Activated CD4-positive, alpha-beta T cell treated with anti-CD3 and anti-CD28 coated beads, Interleukin-2, amount 10 ng/mL, durations not matched to agents 7 days and 5 days (primary cell): ENCODE measurements at regions of chr16 and their contacts with region 1.

Region 1: GRCh38 chr16:81035398-81035974 is at the start of gene ATMIN:
- DNase-seq: peak; percentile 87
- H3K4me3 Mint-ChIP-seq: peak within 1 kb of the TSS; percentile 83
- H3K27ac Mint-ChIP-seq: peak within 1 kb of the TSS; percentile 82
- H3K4me1 Mint-ChIP-seq: peaks cover 29% of the 10 kb centered on the region
- H3K27me3 Mint-ChIP-seq: no peaks in the 10 kb centered on the region
- total RNA-seq, gene ATMIN: 28.3 to 37.0 TPM

Region 2: GRCh38 chr16:81006814-81007696 is 28.4 kb before region 1 on chr16 and contains the starts of genes CENPN and CMC2:
- CTCF ChIA-PET with region 1: interaction called, 16 read pairs
- POLR2A ChIA-PET with region 1: no interaction called
- DNase-seq: peak; percentile 98
- H3K4me3 Mint-ChIP-seq: peak within 1 kb of the TSS; percentile 89
- H3K27ac Mint-ChIP-seq: peak within 1 kb of the TSS; percentile 100
- H3K4me1 Mint-ChIP-seq: peaks cover 61% of the 10 kb centered on the region
- H3K27me3 Mint-ChIP-seq: no peaks in the 10 kb centered on the region
- total RNA-seq, gene CENPN: 53.7 to 55.3 TPM
- total RNA-seq, gene CMC2: 90.3 to 99.7 TPM

Region 3: DNA sequence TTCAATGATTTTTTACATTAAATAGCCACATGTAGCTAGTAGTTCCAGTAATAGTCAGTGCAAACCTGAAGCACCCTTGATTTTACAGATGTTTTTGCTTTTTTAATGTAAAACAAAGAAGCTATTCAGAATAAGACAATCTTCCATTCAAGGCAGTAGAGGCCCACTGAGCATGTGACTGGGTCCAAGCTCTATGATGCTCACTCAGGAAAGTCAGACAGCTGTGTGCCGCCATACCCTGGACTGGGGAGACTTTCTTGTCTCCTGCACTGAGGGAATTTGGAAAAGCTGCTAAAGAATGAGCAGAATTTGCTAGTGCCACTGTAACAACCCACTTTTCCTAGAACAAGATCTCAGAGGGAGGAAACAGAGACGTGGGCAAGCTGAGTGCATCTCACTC is 17.0 kb before region 1 on chr16:
- CTCF ChIA-PET with region 1: interaction called, 70 read pairs
- POLR2A ChIA-PET with region 1: interaction called, 9 read pairs
- DNase-seq: no peak
- H3K4me3 Mint-ChIP-seq: no peak overlapping the region
- H3K27ac Mint-ChIP-seq: no peak overlapping the region
- H3K4me1 Mint-ChIP-seq: no peaks in the 10 kb centered on the region
- H3K27me3 Mint-ChIP-seq: no peaks in the 10 kb centered on the region